ENCODE measurements at regions of chr2 and their contacts with region 1.

Region 1: GRCh38 chr2:12534646-12535263 is 182.0 kb upstream of the TRIB2 start:
- DNase-seq: peak; percentile 16 to 95
- H3K4me3 ChIP-seq: no peak overlapping the region
- H3K27ac ChIP-seq: peak overlapping the region; percentile 47
- H3K4me1 ChIP-seq: peaks cover 29% of the 10 kb centered on the region
- H3K27me3 ChIP-seq: no peaks in the 10 kb centered on the region
- CTCF ChIP-seq: no peak

Region 2: DNA sequence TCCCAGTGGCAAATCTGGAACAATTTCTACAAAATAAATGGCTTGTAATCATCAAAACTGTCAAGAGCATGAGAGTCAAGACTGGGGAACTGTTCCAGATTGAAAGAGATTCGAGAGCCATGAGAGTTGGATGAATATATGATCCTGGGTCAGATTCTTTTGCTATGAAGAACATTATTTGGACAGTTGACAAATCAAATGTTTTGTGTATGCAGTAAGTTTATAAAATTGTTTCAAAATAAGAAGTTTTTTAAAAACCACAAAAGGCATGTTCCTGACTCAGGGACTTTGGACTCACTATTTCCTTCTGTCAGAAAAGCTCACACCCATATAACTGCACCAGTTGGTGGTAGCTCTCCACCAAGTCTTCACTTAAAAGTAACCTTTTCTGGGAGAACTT is 1228.8 kb before region 1 on chr2:
- CTCF ChIA-PET with region 1: no interaction called
- POLR2A ChIA-PET with region 1: interaction called, 13 read pairs
- intact Hi-C with region 1: no loop called
- DNase-seq: no peak
- H3K4me3 ChIP-seq: no peak overlapping the region
- H3K27ac ChIP-seq: no peak overlapping the region
- H3K4me1 ChIP-seq: no peaks in the 10 kb centered on the region
- H3K27me3 ChIP-seq: no peaks in the 10 kb centered on the region
- CTCF ChIP-seq: no peak

Region 3: DNA sequence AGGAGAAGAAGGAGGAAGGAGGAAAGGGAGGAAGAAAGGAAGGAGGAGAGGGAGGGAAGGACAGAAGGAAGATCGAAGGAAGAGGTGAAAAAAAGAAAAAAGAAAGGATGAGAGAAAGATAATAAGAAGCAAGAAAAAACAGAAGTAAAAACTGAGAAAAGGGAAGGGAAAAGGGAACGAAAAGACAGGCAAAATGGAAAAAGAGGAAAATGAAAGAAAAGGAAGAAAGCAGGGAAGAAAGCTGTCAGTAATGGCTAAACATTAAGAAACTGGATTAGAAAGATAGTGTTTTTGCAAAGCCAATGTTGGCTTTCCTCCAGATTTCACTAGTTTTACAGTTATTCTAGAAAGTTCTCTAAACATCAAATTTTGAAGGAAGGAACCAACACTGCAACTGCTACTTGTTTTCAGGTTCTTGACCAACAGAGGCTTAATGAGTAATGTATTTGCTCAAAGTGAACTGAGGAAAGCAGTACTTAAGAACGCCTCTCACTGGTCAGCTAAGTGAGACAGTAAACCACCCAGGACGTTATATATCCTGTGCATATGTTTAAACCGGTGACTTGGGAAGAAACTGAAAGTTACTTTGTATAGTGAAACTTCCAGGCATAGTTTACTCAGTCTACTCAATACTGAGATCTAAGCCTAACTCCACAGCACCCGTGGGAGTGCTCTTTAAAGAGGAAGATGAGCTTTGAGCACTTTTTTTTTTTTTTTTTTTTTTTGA is 104.2 kb before region 1 on chr2:
- CTCF ChIA-PET with region 1: no interaction called
- POLR2A ChIA-PET with region 1: interaction called, 17 read pairs
- intact Hi-C with region 1: no loop called
- DNase-seq: no peak
- H3K4me3 ChIP-seq: no peak overlapping the region
- H3K27ac ChIP-seq: no peak overlapping the region
- H3K4me1 ChIP-seq: no peaks in the 10 kb centered on the region
- H3K27me3 ChIP-seq: no peaks in the 10 kb centered on the region
- CTCF ChIP-seq: no peak

Region 4: GRCh38 chr2:12465631-12466135 is 69.1 kb before region 1 on chr2:
- CTCF ChIA-PET with region 1: no interaction called
- POLR2A ChIA-PET with region 1: no interaction called
- intact Hi-C with region 1: no loop called
- DNase-seq: no peak
- H3K4me3 ChIP-seq: no peak overlapping the region
- H3K27ac ChIP-seq: no peak overlapping the region
- H3K4me1 ChIP-seq: no peaks in the 10 kb centered on the region
- H3K27me3 ChIP-seq: no peaks in the 10 kb centered on the region
- CTCF ChIP-seq: no peak

Region 5: DNA sequence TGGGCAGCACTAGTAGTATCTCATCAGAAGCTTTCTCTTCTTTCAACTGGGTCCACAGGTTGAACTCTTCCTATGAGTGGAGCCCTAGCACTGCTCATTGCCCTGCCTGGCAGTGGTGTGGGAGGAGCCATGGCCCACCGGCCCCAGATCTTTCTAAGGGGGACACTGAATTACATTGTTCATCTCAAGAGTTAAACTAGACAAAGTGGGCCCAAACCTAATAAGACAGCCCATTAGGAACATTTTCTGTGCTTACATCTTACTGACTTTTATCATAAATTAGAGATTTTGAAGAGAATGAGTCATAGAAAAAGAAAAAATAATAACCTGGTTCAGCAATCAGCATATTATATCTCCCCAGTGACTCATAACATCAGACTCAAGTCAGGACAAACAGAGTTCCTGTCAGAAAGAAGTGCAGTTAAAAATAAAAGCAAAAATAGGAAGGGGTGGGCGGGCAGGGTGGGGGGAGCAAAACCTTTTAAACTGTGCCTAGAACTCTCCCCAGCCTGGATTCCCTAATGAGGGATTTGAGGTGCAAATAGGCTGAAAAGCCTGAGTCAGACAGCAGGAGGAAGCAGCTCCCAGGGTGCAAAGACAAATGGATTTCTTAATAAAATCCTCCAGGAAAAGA is 20.4 kb after region 1 on chr2:
- CTCF ChIA-PET with region 1: interaction called, 7 read pairs
- POLR2A ChIA-PET with region 1: interaction called, 13 read pairs
- intact Hi-C with region 1: no loop called
- DNase-seq: peak; percentile 18 to 70
- H3K4me3 ChIP-seq: no peak overlapping the region
- H3K27ac ChIP-seq: 0 out of 2 replicates have a peak overlapping the region, but pooled peaks have one; percentile 4
- H3K4me1 ChIP-seq: peaks cover 20% of the 10 kb centered on the region
- H3K27me3 ChIP-seq: no peaks in the 10 kb centered on the region
- CTCF ChIP-seq: no peak

Measured in PC-9 (cell line).